ENCODE measurements at regions of chr1 and their contacts with region 1.

Region 1: DNA sequence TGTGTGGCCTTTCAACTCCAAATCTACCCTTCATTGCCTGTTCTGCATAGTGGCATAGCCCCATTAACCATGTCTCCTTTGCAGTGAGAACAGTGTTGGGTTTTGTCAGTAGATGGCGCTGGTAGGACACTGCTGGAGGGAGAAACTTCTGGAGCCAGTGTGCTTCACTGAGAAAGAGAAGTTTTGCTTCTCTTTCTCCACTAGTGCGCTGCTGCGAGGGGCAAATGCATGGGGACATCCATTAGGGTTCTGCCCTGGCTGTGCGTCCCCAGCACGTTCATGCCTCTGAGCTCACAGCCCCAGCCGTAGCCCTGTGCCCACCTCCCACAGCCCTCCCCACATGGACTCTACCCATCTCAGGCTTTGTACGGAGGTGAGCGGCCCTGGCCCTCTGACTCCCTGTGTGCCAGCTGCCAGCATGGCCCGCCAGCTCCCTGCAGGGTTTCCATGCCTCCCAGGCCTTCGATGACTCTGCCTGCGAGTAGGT is 53.1 kb downstream of the RIMS3 start:
- DNase-seq: peak; percentile 64 to 86 (median 77)
- H3K4me3 ChIP-seq: no peak overlapping the region
- H3K27ac ChIP-seq: no peak overlapping the region
- H3K4me1 ChIP-seq: no peaks in the 10 kb centered on the region
- H3K27me3 ChIP-seq: no peaks in the 10 kb centered on the region
- CTCF ChIP-seq: peak; percentile 76 to 87 (median 84)
- POLR2A ChIP-seq: no peak

Region 2: DNA sequence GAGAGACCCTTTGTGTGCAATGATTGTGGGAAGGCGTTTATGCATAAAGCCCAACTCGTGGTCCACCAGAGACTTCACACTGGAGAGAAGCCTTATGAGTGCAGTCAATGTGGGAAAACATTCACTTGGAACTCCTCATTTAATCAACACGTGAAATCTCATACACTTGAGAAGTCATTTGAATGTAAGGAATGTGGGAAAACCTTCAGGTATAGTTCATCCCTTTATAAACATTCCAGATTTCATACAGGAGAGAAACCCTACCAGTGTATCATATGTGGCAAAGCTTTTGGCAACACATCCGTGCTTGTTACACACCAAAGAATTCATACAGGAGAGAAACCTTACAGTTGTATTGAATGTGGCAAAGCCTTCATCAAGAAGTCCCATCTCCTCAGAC is 65.4 kb before region 1 on chr1:
- intact Hi-C with region 1: no loop called
- DNase-seq: no peak
- H3K4me3 ChIP-seq: no peak overlapping the region
- H3K27ac ChIP-seq: no peak overlapping the region
- H3K4me1 ChIP-seq: no peaks in the 10 kb centered on the region
- H3K27me3 ChIP-seq: no peaks in the 10 kb centered on the region
- CTCF ChIP-seq: no peak
- POLR2A ChIP-seq: no peak

Region 3: DNA sequence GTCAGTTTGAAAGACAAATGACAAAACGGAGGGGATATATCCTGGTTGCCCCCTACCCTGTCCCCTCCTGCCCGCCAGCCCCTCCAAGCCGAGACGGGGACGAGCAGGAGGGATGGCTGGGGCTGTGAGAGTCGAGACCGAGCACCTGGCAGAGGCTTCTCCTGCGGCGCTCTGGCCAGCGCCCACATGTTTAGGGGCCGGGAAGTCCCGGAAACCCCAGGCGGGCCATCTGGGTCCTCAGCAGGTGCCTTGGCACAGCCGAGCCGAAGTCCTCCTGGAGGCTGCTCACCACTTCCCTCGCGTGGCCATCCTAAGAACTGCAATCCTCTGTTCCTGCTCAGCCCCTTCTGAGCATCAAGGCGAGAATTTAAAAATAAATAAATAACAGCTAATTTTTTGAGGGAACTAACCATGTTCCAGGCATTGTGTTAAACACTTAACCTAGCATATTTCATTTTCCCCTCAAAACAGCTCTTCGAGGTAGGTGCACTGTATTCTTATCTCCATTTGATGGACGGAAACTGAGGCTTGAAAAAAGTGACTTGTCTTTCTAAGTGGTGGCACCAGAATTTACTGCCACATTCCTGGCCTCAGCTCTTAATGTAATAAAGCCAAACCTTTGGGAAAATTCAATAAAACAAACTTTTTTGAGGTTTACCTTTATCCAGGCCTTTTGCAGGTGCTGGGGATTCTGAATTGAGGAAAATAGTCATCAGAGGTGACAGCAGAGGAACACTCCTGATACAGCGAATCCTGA is 56.6 kb after region 1 on chr1:
- intact Hi-C with region 1: loop called in 1 of 2 experiments (anchors 10 kb)
- DNase-seq: peak; percentile 67 to 92 (median 80)
- H3K4me3 ChIP-seq: peak overlapping the region in 1 of 4 donors; percentile 35
- H3K27ac ChIP-seq: no peak overlapping the region
- H3K4me1 ChIP-seq: peaks cover 10 to 15% of the 10 kb centered on the region in 2 donors
- H3K27me3 ChIP-seq: no peaks in the 10 kb centered on the region
- CTCF ChIP-seq: peak; percentile 78 to 97 (median 90)
- POLR2A ChIP-seq: no peak

Region 4: GRCh38 chr1:40951943-40952743 is 339.8 kb after region 1 on chr1:
- intact Hi-C with region 1: loop called in 1 of 2 experiments (anchors 5 kb)
- DNase-seq: peak; percentile 66 to 89 (median 72)
- H3K4me3 ChIP-seq: no peak overlapping the region
- H3K27ac ChIP-seq: no peak overlapping the region
- H3K4me1 ChIP-seq: no peaks in the 10 kb centered on the region
- H3K27me3 ChIP-seq: no peaks in the 10 kb centered on the region
- CTCF ChIP-seq: peak; percentile 78 to 93 (median 92)
- POLR2A ChIP-seq: no peak